B cell (primary cell): ENCODE measurements at regions of chr19 and their contacts with region 1.

Region 1: GRCh38 chr19:44002566-44003460 is at the start of gene ZNF230:
- DNase-seq: peak; percentile 92
- ATAC-seq: peak; percentile 95
- H3K4me3 ChIP-seq: peak within 1 kb of the TSS; percentile 75 to 96 (median 89)
- H3K4me3 Mint-ChIP-seq: peak within 1 kb of the TSS; percentile 99
- H3K27ac ChIP-seq: peak within 1 kb of the TSS; percentile 67 to 78
- H3K27ac Mint-ChIP-seq: peak within 1 kb of the TSS; percentile 95
- H3K4me1 ChIP-seq: peaks cover 13 to 14% of the 10 kb centered on the region in 2 donors
- H3K4me1 Mint-ChIP-seq: peaks cover 19% of the 10 kb centered on the region
- H3K27me3 ChIP-seq: no peaks in the 10 kb centered on the region
- H3K27me3 Mint-ChIP-seq: no peaks in the 10 kb centered on the region
- CTCF ChIP-seq: no peak
- total RNA-seq, gene ZNF230: 16.8 TPM in 2 replicates

Region 2: DNA sequence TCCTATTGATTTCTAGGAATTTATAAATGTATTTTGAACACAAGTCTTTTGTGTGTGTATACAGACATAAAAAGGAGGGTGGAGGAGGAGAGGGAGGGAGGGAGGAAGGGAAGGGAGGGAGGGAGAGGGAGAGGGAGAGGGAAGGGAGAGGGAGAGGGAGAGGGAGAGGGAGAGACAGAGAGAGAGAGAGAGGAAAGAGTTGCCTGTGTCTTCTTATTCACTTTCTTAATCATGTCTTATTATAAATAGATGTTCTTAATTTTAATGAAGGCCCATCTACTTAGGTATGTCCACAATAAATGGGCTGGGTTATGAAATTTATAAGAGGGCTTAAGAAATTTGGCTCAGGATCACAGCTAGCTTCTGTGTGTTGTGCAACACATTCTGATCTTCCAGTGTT is 107.1 kb before region 1 on chr19:
- CTCF ChIA-PET with region 1: no interaction called
- POLR2A ChIA-PET with region 1: no interaction called
- intact Hi-C with region 1: no loop called
- DNase-seq: no peak
- ATAC-seq: no peak
- H3K4me3 ChIP-seq: no peak overlapping the region
- H3K4me3 Mint-ChIP-seq: no peak overlapping the region
- H3K27ac ChIP-seq: no peak overlapping the region
- H3K27ac Mint-ChIP-seq: no peak overlapping the region
- H3K4me1 ChIP-seq: no peaks in the 10 kb centered on the region
- H3K4me1 Mint-ChIP-seq: peaks cover 3% of the 10 kb centered on the region
- H3K27me3 ChIP-seq: no peaks in the 10 kb centered on the region
- H3K27me3 Mint-ChIP-seq: no peaks in the 10 kb centered on the region
- CTCF ChIP-seq: no peak

Region 3: DNA sequence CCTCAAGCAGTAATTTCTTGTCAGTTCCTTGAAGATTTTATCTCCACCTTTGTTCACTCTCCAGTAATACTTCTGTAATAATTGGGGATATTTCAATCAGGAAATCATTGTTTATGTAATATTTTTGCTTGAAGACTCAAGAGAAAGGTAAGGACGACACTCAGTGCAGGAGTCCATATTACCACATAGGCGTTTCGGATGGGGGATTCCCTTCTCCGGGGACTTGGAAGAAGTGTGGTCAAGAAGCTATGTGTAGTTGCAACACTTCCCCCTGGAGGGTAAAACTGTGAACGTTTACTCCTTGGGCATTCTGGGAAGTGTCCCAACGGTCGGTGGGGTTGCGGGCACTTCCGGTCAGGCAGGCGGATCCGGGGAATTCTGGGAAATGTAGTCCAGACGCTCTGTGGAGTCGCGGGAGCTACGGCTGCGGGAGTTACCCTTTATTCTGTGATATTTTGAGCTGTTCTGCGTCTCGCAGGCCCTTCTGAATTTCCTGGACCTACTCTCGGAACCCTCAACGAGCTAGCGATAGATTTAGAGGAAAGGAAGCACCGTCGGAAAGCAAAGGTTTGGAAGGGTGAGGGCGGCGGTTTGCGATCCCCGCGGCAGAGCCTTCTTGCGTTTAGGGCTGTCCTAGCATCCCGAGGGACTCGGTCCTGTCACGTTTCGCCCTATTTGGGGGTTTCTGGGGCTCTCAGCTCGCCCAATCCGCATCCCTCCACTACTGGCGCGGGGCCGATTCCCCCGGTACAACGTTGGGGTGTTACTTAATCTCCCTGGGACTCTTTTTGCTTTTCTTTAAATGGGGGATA is 51.8 kb before region 1 on chr19 and contains the start of gene ZNF221:
- CTCF ChIA-PET with region 1: no interaction called
- POLR2A ChIA-PET with region 1: no interaction called
- intact Hi-C with region 1: loop called (anchors 1 kb)
- DNase-seq: peak; percentile 80
- ATAC-seq: peak; percentile 94
- H3K4me3 ChIP-seq: peak within 1 kb of the TSS; percentile 68 to 95 (median 88)
- H3K4me3 Mint-ChIP-seq: peak within 1 kb of the TSS; percentile 96
- H3K27ac ChIP-seq: peak within 1 kb of the TSS; percentile 22 to 51
- H3K27ac Mint-ChIP-seq: peak within 1 kb of the TSS; percentile 80
- H3K4me1 ChIP-seq: peaks cover 3 to 9% of the 10 kb centered on the region in 2 donors
- H3K4me1 Mint-ChIP-seq: peaks cover 12% of the 10 kb centered on the region
- H3K27me3 ChIP-seq: peaks cover 0 to 7% (median 2%) of the 10 kb centered on the region in 4 experiments
- H3K27me3 Mint-ChIP-seq: peaks cover 10% of the 10 kb centered on the region
- CTCF ChIP-seq: no peak
- total RNA-seq, gene ZNF221: 5.0 and 7.0 TPM in 2 replicates

Region 4: GRCh38 chr19:44071824-44072542 is 69.2 kb after region 1 on chr19 and contains the start of gene ZNF284:
- CTCF ChIA-PET with region 1: no interaction called
- POLR2A ChIA-PET with region 1: no interaction called
- intact Hi-C with region 1: loop called (anchors 1 kb)
- DNase-seq: peak; percentile 89
- ATAC-seq: peak; percentile 100
- H3K4me3 ChIP-seq: peak within 1 kb of the TSS; percentile 68 to 89 (median 76)
- H3K4me3 Mint-ChIP-seq: peak within 1 kb of the TSS; percentile 89
- H3K27ac ChIP-seq: peak within 1 kb of the TSS; percentile 32 to 47
- H3K27ac Mint-ChIP-seq: peak within 1 kb of the TSS; percentile 76
- H3K4me1 ChIP-seq: peaks cover 13 to 16% of the 10 kb centered on the region in 2 donors
- H3K4me1 Mint-ChIP-seq: peaks cover 25% of the 10 kb centered on the region
- H3K27me3 ChIP-seq: no peaks in the 10 kb centered on the region
- H3K27me3 Mint-ChIP-seq: no peaks in the 10 kb centered on the region
- CTCF ChIP-seq: no peak
- total RNA-seq, gene ZNF284: 3.3 and 4.9 TPM in 2 replicates

Region 5: GRCh38 chr19:44164673-44165512 is 162.1 kb after region 1 on chr19 and contains the start of gene ZNF226:
- CTCF ChIA-PET with region 1: no interaction called
- POLR2A ChIA-PET with region 1: no interaction called
- intact Hi-C with region 1: loop called (anchors 1 kb)
- DNase-seq: peak; percentile 89
- ATAC-seq: peak; percentile 95
- H3K4me3 ChIP-seq: peak within 1 kb of the TSS; percentile 72 to 99 (median 88)
- H3K4me3 Mint-ChIP-seq: peak within 1 kb of the TSS; percentile 98
- H3K27ac ChIP-seq: peak within 1 kb of the TSS; percentile 73 to 83
- H3K27ac Mint-ChIP-seq: peak within 1 kb of the TSS; percentile 98
- H3K4me1 ChIP-seq: peaks cover 11 to 16% of the 10 kb centered on the region in 2 donors
- H3K4me1 Mint-ChIP-seq: peaks cover 31% of the 10 kb centered on the region
- H3K27me3 ChIP-seq: no peaks in the 10 kb centered on the region
- H3K27me3 Mint-ChIP-seq: no peaks in the 10 kb centered on the region
- CTCF ChIP-seq: no peak
- total RNA-seq, gene ZNF226: 55.8 and 58.8 TPM in 2 replicates

Region 6: GRCh38 chr19:44401139-44402115 is 398.6 kb after region 1 on chr19 and contains the start of gene ZNF285:
- CTCF ChIA-PET with region 1: no interaction called
- POLR2A ChIA-PET with region 1: no interaction called
- intact Hi-C with region 1: loop called (anchors 5 kb)
- DNase-seq: peak; percentile 89
- ATAC-seq: peak; percentile 99
- H3K4me3 ChIP-seq: peak within 1 kb of the TSS; percentile 59 to 77 (median 73)
- H3K4me3 Mint-ChIP-seq: peak within 1 kb of the TSS; percentile 96
- H3K27ac ChIP-seq: no peak within 1 kb of the TSS
- H3K27ac Mint-ChIP-seq: peak within 1 kb of the TSS; percentile 72
- H3K4me1 ChIP-seq: peaks cover 0 to 13% of the 10 kb centered on the region in 2 donors
- H3K4me1 Mint-ChIP-seq: peaks cover 10% of the 10 kb centered on the region
- H3K27me3 ChIP-seq: peaks cover 0 to 4% (median 1%) of the 10 kb centered on the region in 4 experiments
- H3K27me3 Mint-ChIP-seq: peaks cover 5% of the 10 kb centered on the region
- CTCF ChIP-seq: no peak
- total RNA-seq, gene ZNF285: 7.6 and 7.9 TPM in 2 replicates